ENCODE measurements at regions of chr5 and their contacts with region 1.

Region 1: DNA sequence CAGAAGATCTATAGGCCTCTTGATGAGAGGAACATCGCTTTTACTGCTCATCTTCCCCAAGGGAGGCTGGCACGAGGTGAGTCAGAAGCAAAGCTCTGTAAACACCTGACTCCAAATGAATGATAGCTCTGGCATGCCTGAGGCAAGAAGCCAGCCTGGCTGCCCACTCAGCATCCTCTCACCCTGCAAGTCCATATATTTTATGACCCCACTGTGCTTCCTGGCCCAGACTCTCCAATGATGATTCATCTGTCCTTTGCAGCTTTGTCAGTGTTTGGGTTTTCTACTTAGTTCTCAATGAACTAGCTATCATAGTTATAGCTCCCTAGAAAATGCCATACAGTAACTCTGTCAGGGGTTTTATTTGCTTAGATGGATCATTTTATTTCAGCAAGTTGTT is 52.1 kb upstream of the FSTL4 start:
- DNase-seq: peak; percentile 94
- ATAC-seq: peak; percentile 93
- H3K4me3 ChIP-seq: no peak overlapping the region
- H3K27ac ChIP-seq: peak overlapping the region; percentile 93
- H3K4me1 ChIP-seq: peaks cover 44% of the 10 kb centered on the region
- H3K27me3 ChIP-seq: no peaks in the 10 kb centered on the region
- CTCF ChIP-seq: no peak

Region 2: GRCh38 chr5:133546500-133546899 is 117.9 kb before region 1 on chr5:
- CTCF ChIA-PET with region 1: no interaction called
- POLR2A ChIA-PET with region 1: no interaction called
- intact Hi-C with region 1: no loop called
- DNase-seq: no peak
- ATAC-seq: no peak
- H3K4me3 ChIP-seq: no peak overlapping the region
- H3K27ac ChIP-seq: no peak overlapping the region
- H3K4me1 ChIP-seq: no peaks in the 10 kb centered on the region
- H3K27me3 ChIP-seq: no peaks in the 10 kb centered on the region
- CTCF ChIP-seq: no peak

Region 3: GRCh38 chr5:133685402-133686018 is 21.1 kb after region 1 on chr5:
- CTCF ChIA-PET with region 1: no interaction called
- POLR2A ChIA-PET with region 1: no interaction called
- intact Hi-C with region 1: loop called (anchors 2 kb)
- DNase-seq: no peak
- ATAC-seq: no peak
- H3K4me3 ChIP-seq: no peak overlapping the region
- H3K27ac ChIP-seq: peak overlapping the region; percentile 86
- H3K4me1 ChIP-seq: peaks cover 46% of the 10 kb centered on the region
- H3K27me3 ChIP-seq: no peaks in the 10 kb centered on the region
- CTCF ChIP-seq: no peak

Region 4: GRCh38 chr5:133715622-133716021 is 51.2 kb after region 1 on chr5:
- CTCF ChIA-PET with region 1: no interaction called
- POLR2A ChIA-PET with region 1: no interaction called
- intact Hi-C with region 1: loop called (anchors 1 kb)
- DNase-seq: no peak
- ATAC-seq: no peak
- H3K4me3 ChIP-seq: no peak overlapping the region
- H3K27ac ChIP-seq: peak overlapping the region; percentile 92
- H3K4me1 ChIP-seq: peaks cover 31% of the 10 kb centered on the region
- H3K27me3 ChIP-seq: no peaks in the 10 kb centered on the region
- CTCF ChIP-seq: no peak

Region 5: GRCh38 chr5:133754575-133755169 is 90.3 kb after region 1 on chr5:
- CTCF ChIA-PET with region 1: no interaction called
- POLR2A ChIA-PET with region 1: no interaction called
- intact Hi-C with region 1: loop called (anchors 5 kb)
- DNase-seq: peak; percentile 36
- ATAC-seq: no peak
- H3K4me3 ChIP-seq: no peak overlapping the region
- H3K27ac ChIP-seq: peak overlapping the region; percentile 61
- H3K4me1 ChIP-seq: peaks cover 17% of the 10 kb centered on the region
- H3K27me3 ChIP-seq: no peaks in the 10 kb centered on the region
- CTCF ChIP-seq: peak; percentile 56

Region 6: GRCh38 chr5:134041570-134042411 is 377.4 kb after region 1 on chr5:
- CTCF ChIA-PET with region 1: no interaction called
- POLR2A ChIA-PET with region 1: no interaction called
- intact Hi-C with region 1: no loop called
- DNase-seq: no peak
- ATAC-seq: no peak
- H3K4me3 ChIP-seq: no peak overlapping the region
- H3K27ac ChIP-seq: no peak overlapping the region
- H3K4me1 ChIP-seq: no peaks in the 10 kb centered on the region
- H3K27me3 ChIP-seq: no peaks in the 10 kb centered on the region
- CTCF ChIP-seq: no peak